Aorta (tissue), 5 donors: ENCODE measurements at regions of chr22 and their contacts with region 1.

Region 1: DNA sequence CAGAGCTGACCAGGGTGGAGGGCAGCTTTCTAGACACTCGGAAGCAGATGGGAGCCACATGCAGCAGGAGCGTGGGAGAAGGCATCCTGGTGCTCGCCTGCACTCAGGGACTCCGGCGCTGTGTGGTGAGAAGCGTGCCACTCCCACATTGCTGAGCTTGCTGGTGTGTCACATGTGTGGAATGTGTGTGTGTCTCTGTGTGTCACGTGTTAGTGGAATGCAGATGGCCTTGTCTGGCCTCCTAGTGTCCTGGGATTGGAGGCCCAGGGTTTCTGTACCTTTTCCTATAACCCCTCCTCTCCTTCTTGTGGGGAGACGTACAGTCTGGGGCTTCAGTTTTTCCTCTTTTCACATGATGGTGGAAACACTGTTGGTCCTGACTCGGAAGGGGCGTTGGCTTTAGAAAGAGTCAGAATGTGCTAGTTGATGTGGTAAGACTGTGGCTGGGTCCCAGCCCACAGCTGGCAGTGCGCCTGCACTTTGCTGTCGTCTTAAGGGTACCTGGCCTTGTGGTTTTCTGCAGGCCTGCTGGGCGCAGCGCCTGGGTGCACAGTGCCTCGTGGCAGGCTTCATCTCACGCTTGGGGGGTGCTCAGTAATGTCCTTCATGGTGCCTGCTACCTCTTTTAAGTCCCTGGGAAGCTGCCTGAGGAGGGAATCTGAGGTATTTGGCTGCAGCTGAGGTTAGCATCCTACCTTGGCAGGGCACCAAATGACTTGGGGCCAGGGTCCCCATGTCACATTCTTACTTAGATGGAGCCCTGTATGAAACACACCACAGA is 61.8 kb downstream of the MED15 start:
- DNase-seq: peak; percentile 81 to 89
- ATAC-seq: peak; percentile 78
- H3K4me3 ChIP-seq: no peak overlapping the region
- H3K27ac ChIP-seq: peak overlapping the region in 1 of 2 donors; percentile 66
- H3K4me1 ChIP-seq: no peaks in the 10 kb centered on the region
- H3K27me3 ChIP-seq: no peaks in the 10 kb centered on the region

Region 2: DNA sequence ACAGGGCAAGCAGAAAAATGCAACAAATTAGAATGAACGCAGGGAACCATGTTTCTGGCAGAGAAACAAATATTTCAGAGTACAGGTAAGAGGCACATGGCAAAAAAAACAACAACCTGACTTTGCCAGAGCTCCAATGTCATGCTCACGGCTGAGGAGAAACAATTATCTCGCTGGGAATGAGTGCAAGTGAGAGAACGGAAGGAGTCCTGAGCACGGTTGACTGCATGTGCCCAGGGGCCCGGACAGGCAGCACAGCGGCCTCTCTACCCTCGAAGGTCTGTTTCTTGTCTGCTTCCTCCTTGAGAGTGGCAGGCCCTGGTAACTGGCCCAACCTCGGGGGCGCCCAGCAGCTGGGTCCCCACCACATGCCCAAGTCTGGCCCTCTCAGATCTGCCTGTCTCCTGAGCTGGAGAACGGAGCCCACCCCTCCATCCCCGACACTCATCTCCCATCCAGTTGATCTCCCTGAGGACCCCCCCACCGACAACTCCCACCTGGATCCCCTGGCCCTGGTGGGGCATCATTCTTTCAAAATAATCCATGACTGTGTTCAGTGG is 276.4 kb before region 1 on chr22:
- intact Hi-C with region 1: no loop called
- DNase-seq: no peak
- ATAC-seq: no peak
- H3K4me3 ChIP-seq: no peak overlapping the region
- H3K27ac ChIP-seq: no peak overlapping the region
- H3K4me1 ChIP-seq: no peaks in the 10 kb centered on the region
- H3K27me3 ChIP-seq: no peaks in the 10 kb centered on the region

Region 3: GRCh38 chr22:20507253-20508066 is 61.7 kb before region 1 on chr22 and contains the start of gene MED15:
- intact Hi-C with region 1: loop called in 1 of 2 experiments (anchors 1 kb)
- DNase-seq: peak; percentile 95 to 96
- ATAC-seq: peak; percentile 95
- H3K4me3 ChIP-seq: peak within 1 kb of the TSS; percentile 47 to 79
- H3K27ac ChIP-seq: peak within 1 kb of the TSS; percentile 53 to 95
- H3K4me1 ChIP-seq: peaks cover 3 to 5% of the 10 kb centered on the region in 2 donors
- H3K27me3 ChIP-seq: no peaks in the 10 kb centered on the region
- total RNA-seq, gene MED15: 93.7 to 119 TPM

Region 4: DNA sequence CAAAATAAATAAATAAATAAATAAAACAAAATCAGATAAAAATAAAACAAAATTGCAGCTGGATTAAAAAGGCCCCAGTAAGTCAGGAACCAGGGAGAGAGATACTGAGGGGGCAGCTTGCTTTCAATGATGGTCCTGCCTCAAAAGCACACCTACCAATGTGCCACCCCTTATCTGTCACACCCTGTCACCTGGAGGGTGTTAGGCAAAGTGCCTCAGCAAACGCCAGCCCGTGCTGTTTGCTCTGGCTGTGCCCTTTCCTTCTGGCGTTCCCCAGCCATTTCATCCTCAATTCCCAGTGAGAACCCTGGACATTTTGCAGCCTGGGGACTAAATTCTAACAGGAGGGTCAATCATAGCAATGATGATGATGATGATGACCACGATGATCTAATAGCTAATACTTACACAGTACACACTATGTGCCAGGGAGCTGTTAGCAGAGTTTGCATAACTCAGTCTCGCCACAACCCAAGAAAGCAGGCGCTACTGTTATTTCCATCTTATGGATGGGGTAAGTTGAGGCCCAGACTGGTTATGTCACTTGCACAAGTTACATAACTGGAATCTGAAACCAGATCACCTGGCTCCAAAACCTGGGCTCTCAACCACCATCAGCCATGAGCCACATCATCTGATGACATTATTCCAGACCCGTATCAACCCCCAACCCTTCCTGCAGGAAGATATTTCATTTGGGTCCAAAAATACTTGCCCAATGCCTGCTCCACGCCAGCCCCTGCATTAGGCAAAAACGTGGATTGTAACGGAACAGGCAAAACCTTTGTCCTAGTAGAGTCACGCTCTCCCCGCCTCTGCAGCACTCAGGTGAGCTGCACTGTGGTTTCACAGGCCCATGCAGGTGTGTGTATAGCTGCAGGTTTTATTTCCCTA is 72.1 kb after region 1 on chr22:
- intact Hi-C with region 1: loop called in 1 of 2 experiments (anchors 2 kb)
- DNase-seq: no peak
- ATAC-seq: no peak
- H3K4me3 ChIP-seq: no peak overlapping the region
- H3K27ac ChIP-seq: no peak overlapping the region
- H3K4me1 ChIP-seq: no peaks in the 10 kb centered on the region
- H3K27me3 ChIP-seq: no peaks in the 10 kb centered on the region